ENCODE measurements at regions of chr3 and their contacts with region 1.

Region 1: GRCh38 chr3:150402217-150402616 is 5.9 kb upstream of the TSC22D2 start:
- DNase-seq: no peak
- H3K4me3 Mint-ChIP-seq: no peak overlapping the region
- H3K27ac Mint-ChIP-seq: no peak overlapping the region
- H3K4me1 Mint-ChIP-seq: no peaks in the 10 kb centered on the region
- H3K27me3 Mint-ChIP-seq: no peaks in the 10 kb centered on the region
- CTCF ChIP-seq: no peak

Region 2: DNA sequence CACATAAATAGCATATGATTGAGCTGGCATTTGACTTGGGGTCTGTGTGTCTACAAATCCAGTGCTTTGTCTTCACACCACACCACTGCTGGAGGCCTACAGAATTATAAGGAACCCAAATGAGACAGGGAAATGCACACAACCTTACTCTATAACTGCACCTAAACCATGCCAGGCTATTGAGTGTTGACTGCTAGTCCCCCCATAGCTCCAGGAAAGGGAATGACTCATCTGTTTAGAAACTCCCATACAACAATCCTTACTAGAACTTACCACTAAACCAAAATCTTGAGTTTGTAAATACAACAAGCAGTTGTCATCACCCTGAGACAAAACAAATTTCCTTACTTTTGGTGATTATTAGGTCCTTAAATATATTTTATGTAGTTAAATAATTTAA is 11.0 kb before region 1 on chr3:
- CTCF ChIA-PET with region 1: no interaction called
- POLR2A ChIA-PET with region 1: interaction called, 67 read pairs
- intact Hi-C with region 1: no loop called
- DNase-seq: peak; percentile 38
- H3K4me3 Mint-ChIP-seq: no peak overlapping the region
- H3K27ac Mint-ChIP-seq: no peak overlapping the region
- H3K4me1 Mint-ChIP-seq: peaks cover 5% of the 10 kb centered on the region
- H3K27me3 Mint-ChIP-seq: no peaks in the 10 kb centered on the region
- CTCF ChIP-seq: no peak

Measured in MCF 10A (cell line).